ENCODE measurements at regions of chr2 and their contacts with region 1.

Region 1: GRCh38 chr2:62705007-62705829 is at the start of gene EHBP1:
- DNase-seq: peak; percentile 100
- ATAC-seq: peak; percentile 94
- H3K4me3 ChIP-seq: peak within 1 kb of the TSS; percentile 77 to 97 (median 94)
- H3K27ac ChIP-seq: peak within 1 kb of the TSS; percentile 70
- H3K4me1 ChIP-seq: peaks cover 19% of the 10 kb centered on the region
- H3K27me3 ChIP-seq: no peaks in the 10 kb centered on the region; a peak in 1 of 5 replicates
- CTCF ChIP-seq: no peak; the same call in 1 of the 2 replicates
- EP300 ChIP-seq: peak in 1 of 2 experiments; percentile 7; a peak in 2 of 4 replicates
- POLR2A ChIP-seq: peak; percentile 91 to 99
- RAD21 ChIP-seq: peak; percentile 56
- total RNA-seq, gene EHBP1: 93.5 and 122 TPM in 2 replicates

Region 2: GRCh38 chr2:62456721-62457539 is 248.3 kb before region 1 on chr2:
- CTCF ChIA-PET with region 1: no interaction called
- POLR2A ChIA-PET with region 1: interaction called, 19 read pairs
- in situ Hi-C with region 1: loop called (anchors 5 kb)
- intact Hi-C with region 1: loop called (anchors 1 kb)
- DNase-seq: peak; percentile 63
- ATAC-seq: peak; percentile 97
- H3K4me3 ChIP-seq: peak overlapping the region; percentile 43 to 70 (median 59); a peak in 5 of 6 replicates
- H3K27ac ChIP-seq: peak overlapping the region; percentile 76
- H3K4me1 ChIP-seq: peaks cover 70% of the 10 kb centered on the region
- H3K27me3 ChIP-seq: no peaks in the 10 kb centered on the region
- CTCF ChIP-seq: peak; percentile 99
- EP300 ChIP-seq: peak; percentile 28 to 44; a peak in 1 of 4 replicates
- POLR2A ChIP-seq: peak in 1 of 2 experiments; percentile 28; a peak in 1 of 4 replicates
- RAD21 ChIP-seq: peak; percentile 100

Region 3: GRCh38 chr2:62526531-62527381 is 178.5 kb before region 1 on chr2:
- CTCF ChIA-PET with region 1: no interaction called
- POLR2A ChIA-PET with region 1: interaction called, 28 read pairs
- in situ Hi-C with region 1: no loop called
- intact Hi-C with region 1: loop called (anchors 2 kb)
- DNase-seq: peak; percentile 99
- ATAC-seq: peak; percentile 98
- H3K4me3 ChIP-seq: no peak overlapping the region; a peak in 1 of 6 replicates
- H3K27ac ChIP-seq: peak overlapping the region; percentile 98
- H3K4me1 ChIP-seq: peaks cover 69% of the 10 kb centered on the region
- H3K27me3 ChIP-seq: no peaks in the 10 kb centered on the region
- CTCF ChIP-seq: peak; percentile 40
- EP300 ChIP-seq: peak in 1 of 2 experiments; percentile 97; a peak in 2 of 4 replicates
- POLR2A ChIP-seq: no peak; a peak in 1 of 4 replicates
- RAD21 ChIP-seq: peak; percentile 56

Region 4: DNA sequence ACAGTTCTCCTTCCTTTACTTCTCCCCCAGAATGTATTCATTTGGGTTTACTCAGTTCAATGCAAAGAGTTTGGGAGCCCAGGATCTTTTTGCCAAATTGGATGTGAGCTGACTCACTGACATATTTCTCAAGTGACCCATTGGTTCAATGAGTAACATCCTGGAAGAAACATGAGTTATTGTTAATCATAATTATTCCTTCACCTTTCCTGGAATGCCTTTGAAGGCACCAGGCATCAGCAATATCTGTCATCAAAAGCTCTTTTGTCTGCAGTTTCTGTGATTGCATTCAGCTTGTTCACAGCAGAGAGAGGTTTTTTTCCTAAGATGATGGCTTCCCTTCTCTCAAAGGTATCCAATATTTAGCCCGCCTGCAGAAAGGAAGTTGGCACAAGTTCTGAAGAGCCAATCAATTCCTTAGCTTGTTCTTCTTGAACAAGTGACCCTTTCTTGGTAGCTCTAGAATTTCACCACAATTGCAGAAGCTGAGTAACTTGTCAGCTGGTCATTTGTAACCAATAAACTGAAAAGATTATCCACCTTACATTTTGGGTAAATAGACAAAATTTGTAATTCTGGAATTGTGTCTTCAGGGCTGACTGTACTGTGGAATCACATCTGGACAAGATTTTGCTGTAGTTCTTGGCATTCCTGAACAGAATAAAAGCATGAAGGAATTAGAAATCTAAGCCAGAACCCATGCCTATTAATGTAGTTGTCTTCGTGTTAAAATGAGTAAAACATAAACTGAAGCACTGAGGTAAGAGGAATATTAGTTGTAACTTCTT is 127.0 kb before region 1 on chr2:
- CTCF ChIA-PET with region 1: no interaction called
- POLR2A ChIA-PET with region 1: interaction called, 28 read pairs
- in situ Hi-C with region 1: loop called (anchors 5 kb)
- intact Hi-C with region 1: loop called (anchors 2 kb)
- DNase-seq: peak; percentile 96
- ATAC-seq: peak; percentile 78
- H3K4me3 ChIP-seq: no peak overlapping the region
- H3K27ac ChIP-seq: peak overlapping the region; percentile 71
- H3K4me1 ChIP-seq: peaks cover 66% of the 10 kb centered on the region
- H3K27me3 ChIP-seq: no peaks in the 10 kb centered on the region
- CTCF ChIP-seq: no peak
- EP300 ChIP-seq: peak; percentile 46 to 98; a peak in 2 of 4 replicates
- POLR2A ChIP-seq: no peak
- RAD21 ChIP-seq: no peak

Region 5: GRCh38 chr2:62654423-62654791 is 50.8 kb before region 1 on chr2:
- CTCF ChIA-PET with region 1: no interaction called
- POLR2A ChIA-PET with region 1: interaction called, 19 read pairs
- in situ Hi-C with region 1: no loop called
- intact Hi-C with region 1: no loop called
- DNase-seq: no peak
- ATAC-seq: peak; percentile 71
- H3K4me3 ChIP-seq: no peak overlapping the region
- H3K27ac ChIP-seq: peak overlapping the region; percentile 66
- H3K4me1 ChIP-seq: peaks cover 30% of the 10 kb centered on the region
- H3K27me3 ChIP-seq: no peaks in the 10 kb centered on the region
- CTCF ChIP-seq: no peak
- EP300 ChIP-seq: no peak
- POLR2A ChIP-seq: no peak
- RAD21 ChIP-seq: no peak

Region 6: DNA sequence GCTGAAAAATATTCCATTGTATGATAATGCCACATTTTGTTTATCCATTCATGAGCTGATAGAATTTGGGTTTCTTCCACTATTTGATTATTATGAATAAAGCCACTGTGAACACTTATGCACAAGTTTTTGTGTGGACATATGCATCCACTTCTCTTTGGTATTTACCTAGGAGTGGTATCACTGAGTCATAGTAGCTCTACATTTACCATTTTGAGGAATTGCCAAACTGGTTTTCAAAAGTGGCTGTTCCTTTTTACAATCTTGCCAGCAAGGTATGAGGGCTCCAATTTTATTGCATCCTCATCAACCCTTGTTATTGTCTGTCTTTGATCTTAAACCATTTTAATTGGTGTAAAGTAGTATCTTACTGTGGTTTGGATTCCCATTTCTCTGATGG is 13.0 kb before region 1 on chr2:
- CTCF ChIA-PET with region 1: no interaction called
- POLR2A ChIA-PET with region 1: interaction called, 23 read pairs
- in situ Hi-C with region 1: no loop called
- intact Hi-C with region 1: no loop called
- DNase-seq: no peak
- ATAC-seq: no peak
- H3K4me3 ChIP-seq: no peak overlapping the region
- H3K27ac ChIP-seq: no peak overlapping the region
- H3K4me1 ChIP-seq: no peaks in the 10 kb centered on the region
- H3K27me3 ChIP-seq: no peaks in the 10 kb centered on the region
- CTCF ChIP-seq: no peak
- EP300 ChIP-seq: no peak
- POLR2A ChIP-seq: no peak
- RAD21 ChIP-seq: no peak